ENCODE measurements at regions of chr17 and their contacts with region 1.

Region 1: DNA sequence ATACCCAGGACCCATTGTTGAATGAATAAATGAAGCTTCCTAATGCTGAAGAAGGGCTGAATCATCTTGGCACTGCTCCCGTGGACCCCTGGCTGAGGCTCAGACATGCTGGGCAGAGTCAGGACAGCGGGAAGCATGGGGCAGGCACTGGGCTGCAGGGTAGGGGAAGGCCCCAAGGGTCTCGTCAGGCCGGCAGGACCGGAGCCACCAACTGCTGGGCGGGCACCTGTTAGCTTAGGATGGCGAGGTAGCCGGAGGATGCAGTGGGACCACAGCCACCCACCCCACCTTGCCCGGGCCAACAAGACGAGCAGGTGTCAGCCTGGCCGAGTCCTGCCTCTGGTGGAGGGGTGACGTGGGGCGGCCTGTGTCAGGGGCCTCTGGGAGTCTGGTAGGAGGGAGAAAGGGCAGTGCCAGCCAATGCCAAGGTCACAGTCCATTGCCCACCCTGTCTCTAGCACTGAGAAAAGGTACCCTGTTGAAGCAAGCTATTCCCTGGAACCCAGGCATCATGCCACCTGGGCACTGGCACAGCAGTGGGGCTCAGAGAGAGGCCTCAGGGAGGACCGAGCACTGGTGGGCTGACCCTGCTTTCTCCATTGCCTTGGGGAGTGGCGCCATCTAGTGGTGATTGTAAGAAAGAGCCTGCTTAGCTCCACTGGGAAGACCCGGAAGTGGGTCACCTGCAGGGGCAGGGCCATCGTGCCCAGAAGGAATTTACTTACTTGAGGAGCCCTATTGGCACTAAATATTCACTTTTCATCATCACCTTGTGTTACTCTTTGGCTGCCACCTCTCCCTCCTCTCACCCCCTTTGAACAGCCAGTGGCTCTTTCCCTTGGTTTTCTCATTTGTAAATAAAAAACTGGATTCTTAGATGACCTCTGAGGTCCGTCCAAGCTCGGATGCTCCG is 3.0 kb upstream of the DLX3 start:
- DNase-seq: peak; percentile 90
- CTCF ChIP-seq: peak; percentile 85

Region 2: GRCh38 chr17:49556223-49556971 is 441.6 kb before region 1 on chr17:
- CTCF ChIA-PET with region 1: interaction called, 57 read pairs
- POLR2A ChIA-PET with region 1: no interaction called
- DNase-seq: peak; percentile 92
- CTCF ChIP-seq: peak; percentile 95

Region 3: GRCh38 chr17:49861150-49861892 is 136.7 kb before region 1 on chr17:
- CTCF ChIA-PET with region 1: interaction called, 171 read pairs
- POLR2A ChIA-PET with region 1: no interaction called
- DNase-seq: peak; percentile 81
- CTCF ChIP-seq: peak; percentile 80

Region 4: DNA sequence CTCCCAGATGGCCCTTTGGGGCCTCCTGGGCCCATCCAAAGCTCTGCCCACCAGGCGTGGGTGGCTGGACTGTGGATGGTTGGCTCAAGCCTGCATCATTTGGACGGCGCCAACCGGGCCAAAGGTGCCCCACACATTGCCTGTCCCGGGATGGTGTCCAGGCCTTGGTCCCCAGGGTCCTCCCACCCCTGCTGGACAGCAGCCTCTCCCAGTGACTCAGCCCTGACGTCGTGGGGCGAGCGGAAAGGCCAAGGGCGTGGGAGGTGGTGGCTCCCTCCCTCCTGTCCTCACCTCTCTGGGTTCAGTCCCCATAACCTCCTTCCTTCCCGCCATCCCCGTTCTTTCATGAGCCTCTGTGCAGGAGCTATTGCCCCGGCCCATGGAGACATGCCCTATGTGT is 71.2 kb before region 1 on chr17:
- CTCF ChIA-PET with region 1: interaction called, 18 read pairs
- POLR2A ChIA-PET with region 1: no interaction called
- DNase-seq: no peak
- CTCF ChIP-seq: no peak

Region 5: GRCh38 chr17:49980703-49981197 is 17.3 kb before region 1 on chr17:
- CTCF ChIA-PET with region 1: interaction called, 51 read pairs
- POLR2A ChIA-PET with region 1: no interaction called
- DNase-seq: no peak
- CTCF ChIP-seq: no peak

Region 6: DNA sequence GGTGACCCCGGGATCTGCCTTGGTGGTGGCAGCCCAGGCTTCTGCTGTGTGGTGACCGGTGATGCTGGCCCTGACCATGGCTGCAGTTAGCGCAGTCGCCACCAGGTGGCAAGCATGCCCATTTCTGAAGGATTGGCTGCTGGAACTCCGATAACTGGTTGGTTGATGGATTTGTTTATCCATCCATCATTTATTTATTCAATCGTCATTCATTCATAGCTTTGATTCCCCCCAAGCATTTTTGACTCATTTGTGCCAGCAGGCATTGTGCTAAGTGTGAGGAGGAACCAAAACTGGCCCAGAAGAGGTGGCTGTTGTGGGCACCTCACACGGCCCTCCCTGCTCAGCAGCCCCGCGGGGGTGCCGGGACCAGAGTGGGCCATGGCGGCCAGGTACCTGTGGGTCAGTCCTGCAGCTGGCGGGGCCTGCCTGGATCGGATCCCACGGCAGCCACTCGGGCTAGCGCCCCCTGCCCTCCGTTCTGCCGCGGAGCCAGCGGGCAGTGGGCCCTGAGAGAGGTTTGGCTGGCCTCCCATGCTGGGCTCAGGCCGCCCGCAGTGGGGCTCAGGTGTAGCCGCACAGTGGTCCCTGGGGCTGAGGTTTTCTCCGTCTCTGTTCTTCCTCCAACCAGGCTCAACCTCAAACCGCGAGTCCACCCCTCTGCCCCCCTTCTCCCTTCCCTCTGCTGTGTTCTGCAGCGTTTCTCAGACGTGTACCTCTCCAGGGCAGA is 29.0 kb after region 1 on chr17:
- CTCF ChIA-PET with region 1: interaction called, 27 read pairs
- POLR2A ChIA-PET with region 1: no interaction called
- DNase-seq: peak; percentile 88
- CTCF ChIP-seq: peak; percentile 97

Region 7: DNA sequence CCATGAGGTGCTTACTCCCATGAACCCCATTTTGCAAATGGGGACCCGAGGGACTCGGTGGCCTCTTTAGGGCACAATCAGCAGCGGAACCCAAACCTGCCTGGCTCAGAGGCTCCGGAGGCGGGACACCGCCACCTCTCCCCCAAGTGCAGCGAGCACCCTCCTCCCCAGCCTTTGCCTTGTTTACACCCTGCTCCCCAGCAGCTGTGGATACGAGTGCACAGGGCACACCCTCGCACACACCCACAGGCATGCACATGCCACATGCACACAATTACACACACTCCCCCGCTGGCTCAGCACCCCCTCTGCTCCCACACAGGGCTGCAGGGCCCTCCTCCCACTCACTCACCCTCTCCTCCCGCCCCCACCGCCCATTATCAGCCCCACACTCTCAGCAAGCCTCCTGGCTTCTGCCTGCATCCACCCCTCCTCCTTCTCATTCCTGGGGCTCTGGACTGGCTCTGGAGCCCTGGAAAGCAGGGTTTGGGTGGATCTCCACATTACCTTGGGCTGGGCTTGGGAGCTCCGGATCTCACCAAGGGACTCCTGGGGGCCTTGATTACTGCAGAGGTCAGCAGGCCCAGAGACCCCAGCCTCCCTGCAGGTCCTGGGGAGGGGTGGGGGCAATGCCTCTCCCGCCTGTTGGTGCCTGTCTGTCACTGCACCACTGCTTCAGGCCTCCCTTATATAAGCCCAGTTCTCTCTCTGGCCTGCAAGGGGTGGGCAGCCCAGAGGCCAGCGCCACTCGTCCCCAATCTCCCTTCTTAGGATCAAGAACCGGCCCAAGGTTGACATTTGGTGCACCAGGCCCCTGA is 103.5 kb after region 1 on chr17:
- CTCF ChIA-PET with region 1: no interaction called
- POLR2A ChIA-PET with region 1: no interaction called
- DNase-seq: no peak
- CTCF ChIP-seq: no peak

Region 8: GRCh38 chr17:50123649-50124349 is 125.8 kb after region 1 on chr17:
- CTCF ChIA-PET with region 1: no interaction called
- POLR2A ChIA-PET with region 1: no interaction called
- DNase-seq: no peak
- CTCF ChIP-seq: no peak

Region 9: DNA sequence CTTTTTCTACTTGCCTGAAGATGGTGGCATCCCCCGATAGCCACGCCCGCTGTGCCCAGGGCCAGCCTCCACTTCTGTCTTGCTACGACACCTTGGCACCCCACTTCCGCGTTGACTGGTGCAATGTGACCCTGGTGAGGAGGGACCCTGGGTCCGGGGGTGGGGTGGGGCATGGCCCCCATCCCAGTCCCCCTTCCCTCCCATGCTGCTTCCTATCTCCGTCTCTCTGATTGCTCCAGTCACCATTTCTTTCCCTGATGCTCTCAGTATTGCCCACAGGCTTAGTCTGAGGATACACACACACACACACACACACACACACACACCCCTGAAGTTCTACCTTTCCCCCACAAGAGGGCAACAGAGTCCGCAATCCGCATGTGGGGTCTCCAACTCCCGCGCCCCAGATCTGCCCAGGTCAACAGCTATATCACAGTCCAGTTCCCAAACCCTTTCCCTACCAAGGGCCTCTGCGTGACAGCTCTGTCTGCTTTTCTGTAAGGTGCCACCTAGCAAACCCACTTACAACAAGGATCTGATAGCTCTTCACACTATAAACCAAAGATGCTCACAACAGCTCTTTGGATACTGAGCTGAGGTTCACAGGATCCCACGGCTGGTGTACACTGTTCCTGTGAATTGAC is 171.2 kb after region 1 on chr17:
- CTCF ChIA-PET with region 1: no interaction called
- POLR2A ChIA-PET with region 1: no interaction called
- DNase-seq: peak; percentile 75
- CTCF ChIP-seq: peak; percentile 84

Region 10: DNA sequence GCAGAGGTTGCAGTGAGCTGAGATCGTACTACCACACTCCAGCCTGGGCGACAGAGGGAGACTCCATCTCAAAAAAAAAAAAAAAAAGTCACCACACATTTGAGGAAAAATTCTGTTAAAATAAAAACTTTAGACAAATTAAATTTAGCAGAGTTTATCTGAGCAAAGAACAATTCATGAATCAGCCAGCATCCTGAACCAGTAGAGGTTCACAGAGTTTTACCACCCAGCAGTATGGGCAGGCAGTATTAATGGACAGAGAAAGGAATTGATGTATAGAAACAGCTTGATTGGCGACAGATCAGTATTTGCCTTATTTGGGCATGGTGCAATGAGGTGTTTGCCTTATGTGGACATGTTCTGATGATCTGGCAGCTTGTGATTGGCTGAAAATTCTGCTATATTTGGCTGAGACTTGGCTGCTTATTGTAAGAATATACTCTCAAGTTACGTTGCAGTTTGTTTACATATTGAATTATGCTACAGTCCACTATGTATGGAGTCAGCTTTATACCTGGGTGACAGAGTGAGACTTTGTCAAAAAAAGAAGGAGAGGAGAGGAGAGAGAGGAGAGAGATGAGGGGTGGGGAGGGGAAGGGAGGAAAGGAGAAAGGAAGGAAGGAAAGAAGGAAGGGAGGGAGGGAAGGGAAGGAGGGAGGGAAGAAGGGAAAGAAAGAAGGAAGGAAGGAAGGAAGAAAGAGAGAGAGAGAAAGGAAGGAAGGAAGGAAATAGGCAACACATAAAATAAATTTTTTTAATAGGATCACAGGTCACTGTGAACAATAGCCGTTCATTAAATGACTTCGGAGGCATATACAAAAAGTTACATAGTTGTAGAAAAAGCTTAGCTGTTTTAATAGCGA is 651.2 kb after region 1 on chr17:
- CTCF ChIA-PET with region 1: no interaction called
- POLR2A ChIA-PET with region 1: no interaction called
- DNase-seq: no peak
- CTCF ChIP-seq: no peak